ENCODE measurements at regions of chr2 and their contacts with region 1.

Region 1: GRCh38 chr2:237512774-237513466 is 25.9 kb downstream of the MLPH start:
- DNase-seq: peak; percentile 82 to 93 (median 88)
- ATAC-seq: peak; percentile 87
- H3K4me3 ChIP-seq: no peak overlapping the region
- H3K4me1 ChIP-seq: peaks cover 22% of the 10 kb centered on the region
- CTCF ChIP-seq: peak; percentile 76

Region 2: GRCh38 chr2:237413777-237414661 is 98.9 kb before region 1 on chr2 and contains the start of gene COL6A3:
- intact Hi-C with region 1: no loop called
- DNase-seq: peak; percentile 41 to 68 (median 43)
- ATAC-seq: peak; percentile 59
- H3K4me3 ChIP-seq: peak within 1 kb of the TSS; percentile 13
- H3K4me1 ChIP-seq: no peaks in the 10 kb centered on the region
- CTCF ChIP-seq: no peak
- total RNA-seq, gene COL6A3: 20.9 to 235 (median 194) TPM

Region 3: DNA sequence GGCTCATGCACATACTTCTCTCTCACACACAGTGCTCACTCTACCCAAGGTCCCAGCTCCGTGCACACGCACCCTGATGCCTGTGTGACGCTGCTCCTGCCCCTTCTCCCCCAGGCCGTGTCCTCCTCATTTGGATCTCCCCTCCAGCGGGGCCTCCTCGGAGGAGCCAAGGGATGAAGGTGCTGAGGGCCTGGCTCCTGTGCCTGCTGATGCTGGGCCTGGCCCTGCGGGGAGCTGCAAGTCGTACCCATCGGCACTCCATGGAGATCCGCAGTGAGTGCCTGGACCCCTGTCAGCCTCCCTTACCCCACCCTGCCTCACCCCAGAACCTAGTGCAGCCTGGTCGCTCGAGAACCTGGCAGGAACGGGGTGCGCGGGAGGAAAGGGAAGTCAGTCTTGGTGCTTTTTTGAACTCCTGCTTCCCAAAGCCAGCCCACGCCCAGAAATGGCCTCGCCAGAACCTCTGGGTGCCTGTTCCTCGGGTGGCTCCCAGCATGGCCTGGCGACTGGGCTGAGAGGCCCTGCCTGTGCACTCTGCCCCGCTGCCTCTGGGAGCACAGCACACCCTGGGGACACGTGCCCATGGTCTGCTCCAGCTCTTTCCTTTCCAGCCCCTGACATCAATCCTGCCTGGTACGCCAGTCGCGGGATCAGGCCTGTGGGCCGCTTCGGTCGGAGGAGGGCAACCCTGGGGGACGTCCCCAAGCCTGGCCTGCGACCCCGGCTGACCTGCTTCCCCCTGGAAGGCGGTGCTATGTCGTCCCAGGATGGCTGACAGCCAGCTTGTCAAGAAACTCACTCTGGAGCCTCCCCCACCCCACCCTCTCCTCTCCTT is 53.7 kb after region 1 on chr2 and contains the start of gene PRLH:
- intact Hi-C with region 1: loop called in 1 of 2 experiments (anchors 5 kb)
- DNase-seq: no peak
- ATAC-seq: no peak
- H3K4me3 ChIP-seq: no peak within 1 kb of the TSS
- H3K4me1 ChIP-seq: no peaks in the 10 kb centered on the region
- CTCF ChIP-seq: no peak
- total RNA-seq, gene PRLH: not detected

Region 4: DNA sequence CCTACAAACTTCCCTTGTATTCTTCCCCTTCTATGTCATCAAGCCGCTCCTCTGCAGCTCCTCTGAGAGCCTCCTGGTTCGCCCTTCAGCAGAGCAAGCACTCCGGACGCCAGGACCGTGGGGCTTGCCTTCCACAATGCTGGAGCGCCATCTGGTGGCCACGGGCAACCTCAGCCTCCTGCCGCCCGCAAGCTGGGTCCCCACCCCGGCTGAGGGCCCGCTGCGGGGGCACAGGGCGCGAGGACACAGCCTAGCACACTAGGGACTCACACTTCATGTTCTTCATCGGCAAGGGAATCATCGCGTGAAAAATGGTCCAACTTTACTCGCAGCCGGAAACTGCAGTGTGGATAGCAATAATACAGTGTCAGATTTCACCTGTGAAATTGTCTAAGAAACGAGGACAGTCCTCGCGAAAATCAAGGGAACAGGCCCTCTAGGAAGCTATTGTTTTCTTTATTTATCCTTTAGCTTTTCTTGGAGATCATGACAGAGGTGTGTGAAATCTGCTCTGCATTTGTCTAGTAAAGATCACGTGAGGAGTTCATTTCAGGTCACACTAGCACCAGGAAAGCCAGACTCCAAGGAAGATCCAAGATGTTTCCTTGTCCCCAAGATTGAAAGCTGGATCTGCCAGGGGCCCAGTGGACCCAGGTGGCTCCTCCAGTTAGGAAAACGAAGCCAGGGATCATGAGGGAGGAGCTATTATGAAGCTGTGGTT is 59.3 kb after region 1 on chr2:
- intact Hi-C with region 1: loop called (anchors 2 to 5 kb)
- DNase-seq: peak; percentile 87 to 92 (median 90)
- ATAC-seq: peak; percentile 97
- H3K4me3 ChIP-seq: no peak overlapping the region
- H3K4me1 ChIP-seq: peaks cover 10% of the 10 kb centered on the region
- CTCF ChIP-seq: peak; percentile 92